ENCODE measurements at regions of chr9 and their contacts with region 1.

Region 1: DNA sequence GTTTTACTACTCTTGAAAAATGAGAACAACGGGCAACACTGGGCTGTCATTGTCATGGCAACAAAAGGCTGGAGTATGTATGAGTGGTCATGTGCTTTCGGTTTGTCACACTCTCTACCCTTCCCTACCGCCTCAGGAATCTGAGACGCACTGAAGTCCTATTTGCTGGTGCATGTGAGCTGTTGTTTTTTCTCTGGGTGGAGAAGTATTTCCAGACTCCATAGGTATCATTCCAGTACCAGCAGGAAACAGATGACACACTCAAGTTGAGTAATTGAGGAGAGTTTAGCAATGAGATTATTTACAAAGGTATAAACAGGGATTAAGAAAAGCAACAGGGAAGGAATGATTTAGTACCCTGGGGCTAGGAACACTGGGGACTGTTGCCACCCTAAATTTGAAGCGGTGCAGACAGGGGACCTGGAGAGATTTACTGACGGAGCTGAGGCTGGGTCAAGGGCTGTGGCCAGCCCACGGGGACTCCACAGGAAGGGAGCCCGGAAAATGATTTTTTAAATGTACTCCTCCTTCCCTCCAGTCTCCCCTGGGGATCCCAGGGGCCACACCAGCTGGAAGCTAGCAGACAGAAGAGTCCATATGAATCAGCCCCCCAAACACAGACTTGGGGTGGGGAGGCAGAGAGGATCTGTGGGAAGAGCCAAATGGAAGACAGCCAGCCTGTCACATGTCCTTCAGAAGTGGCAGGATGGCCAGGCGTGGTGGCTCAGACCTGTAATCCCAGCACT is 13.3 kb upstream of the ZBTB43 start:
- DNase-seq: peak; percentile 99
- H3K4me3 ChIP-seq: no peak overlapping the region
- H3K27ac ChIP-seq: peak overlapping the region; percentile 94
- H3K4me1 ChIP-seq: peaks cover 50% of the 10 kb centered on the region
- H3K27me3 ChIP-seq: no peaks in the 10 kb centered on the region
- CTCF ChIP-seq: no peak

Region 2: DNA sequence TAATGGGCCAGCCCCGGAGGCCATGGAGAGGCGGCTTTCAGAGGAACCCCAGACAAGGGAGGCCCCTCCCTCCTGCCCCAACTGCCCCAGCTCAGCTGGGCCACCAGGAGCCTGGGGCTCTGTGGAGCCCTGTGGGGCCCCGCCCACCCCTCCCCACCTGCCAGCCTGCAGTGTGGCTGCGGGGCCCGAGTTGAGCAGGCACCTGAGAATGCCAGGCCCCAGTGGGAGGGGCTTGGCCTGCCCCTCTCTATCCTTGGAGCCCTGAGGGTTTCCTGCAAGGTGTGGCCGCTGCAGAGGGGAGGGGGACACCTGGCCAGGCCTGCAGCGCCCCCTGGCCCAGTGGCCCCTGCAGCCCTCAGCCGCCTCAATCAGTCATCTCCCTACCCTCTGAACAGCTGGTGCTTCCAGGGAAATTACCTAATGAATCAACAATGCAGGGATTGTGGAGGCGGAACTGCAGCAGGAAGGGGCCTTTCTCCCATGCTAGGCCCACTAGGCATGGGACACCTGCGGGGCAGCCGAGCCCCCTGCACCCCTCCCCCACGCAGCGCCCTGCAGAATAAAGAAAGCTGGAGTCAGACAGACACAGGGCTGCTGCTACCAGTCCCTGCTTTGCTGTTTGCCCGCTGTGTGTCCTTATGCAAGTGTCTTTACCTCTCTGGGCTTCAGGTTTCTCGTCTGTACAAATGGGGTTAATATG is 129.9 kb before region 1 on chr9:
- CTCF ChIA-PET with region 1: no interaction called
- dilution Hi-C with region 1: loop called (anchors 5 kb)
- in situ Hi-C with region 1: no loop called
- intact Hi-C with region 1: no loop called
- DNase-seq: peak; percentile 87
- H3K4me3 ChIP-seq: no peak overlapping the region
- H3K27ac ChIP-seq: peak overlapping the region; percentile 5
- H3K4me1 ChIP-seq: peaks cover 45% of the 10 kb centered on the region
- H3K27me3 ChIP-seq: no peaks in the 10 kb centered on the region
- CTCF ChIP-seq: peak; percentile 6 to 47

Region 3: DNA sequence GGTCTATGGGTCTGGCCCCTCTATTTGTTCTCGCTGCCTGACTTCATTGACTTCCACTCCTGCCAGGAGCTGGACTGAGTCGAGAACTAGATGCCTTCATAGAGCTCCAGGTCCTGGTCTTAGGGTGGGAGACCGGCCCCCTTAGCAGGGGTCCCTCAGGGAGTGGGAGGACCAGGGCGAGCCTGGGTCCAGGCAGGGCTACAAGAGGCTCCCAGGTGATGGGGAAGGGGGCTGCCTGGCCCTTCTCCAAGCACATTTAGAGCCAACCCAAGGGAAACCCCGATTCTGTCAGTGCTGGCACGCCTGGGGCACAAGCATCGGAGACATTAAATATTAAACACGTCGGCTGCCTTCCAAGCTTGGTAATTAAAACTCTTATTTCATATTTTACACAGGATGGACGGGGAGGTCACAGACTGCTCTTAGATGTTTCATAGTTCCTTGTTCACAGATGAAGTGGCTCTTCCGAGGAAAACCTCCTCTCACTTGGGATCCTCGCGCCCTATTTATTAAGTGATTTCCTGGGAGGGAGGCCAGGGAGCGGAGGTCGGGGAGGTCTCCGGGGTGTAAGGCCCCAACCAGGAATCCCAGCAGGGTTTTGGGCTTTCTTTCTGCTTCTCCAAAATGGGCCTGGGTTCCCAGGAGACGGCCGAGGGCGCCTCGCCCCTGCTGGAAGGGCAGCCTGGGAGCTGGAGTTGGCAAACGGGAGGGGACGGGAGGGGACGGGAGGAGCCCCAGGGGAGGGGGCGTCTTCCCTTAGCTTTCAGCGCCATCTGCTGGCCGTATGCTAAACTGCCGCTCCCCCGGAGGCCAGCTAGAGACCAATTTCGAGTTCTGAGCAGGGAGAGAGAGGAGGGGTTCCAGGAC is 10.2 kb before region 1 on chr9:
- CTCF ChIA-PET with region 1: interaction called, 10 read pairs
- dilution Hi-C with region 1: no loop called
- in situ Hi-C with region 1: no loop called
- intact Hi-C with region 1: no loop called
- DNase-seq: peak; percentile 65
- H3K4me3 ChIP-seq: peak overlapping the region in 1 of 3 experiments; percentile 23
- H3K27ac ChIP-seq: no peak overlapping the region
- H3K4me1 ChIP-seq: no peaks in the 10 kb centered on the region
- H3K27me3 ChIP-seq: no peaks in the 10 kb centered on the region
- CTCF ChIP-seq: peak; percentile 69 to 91

Region 4: DNA sequence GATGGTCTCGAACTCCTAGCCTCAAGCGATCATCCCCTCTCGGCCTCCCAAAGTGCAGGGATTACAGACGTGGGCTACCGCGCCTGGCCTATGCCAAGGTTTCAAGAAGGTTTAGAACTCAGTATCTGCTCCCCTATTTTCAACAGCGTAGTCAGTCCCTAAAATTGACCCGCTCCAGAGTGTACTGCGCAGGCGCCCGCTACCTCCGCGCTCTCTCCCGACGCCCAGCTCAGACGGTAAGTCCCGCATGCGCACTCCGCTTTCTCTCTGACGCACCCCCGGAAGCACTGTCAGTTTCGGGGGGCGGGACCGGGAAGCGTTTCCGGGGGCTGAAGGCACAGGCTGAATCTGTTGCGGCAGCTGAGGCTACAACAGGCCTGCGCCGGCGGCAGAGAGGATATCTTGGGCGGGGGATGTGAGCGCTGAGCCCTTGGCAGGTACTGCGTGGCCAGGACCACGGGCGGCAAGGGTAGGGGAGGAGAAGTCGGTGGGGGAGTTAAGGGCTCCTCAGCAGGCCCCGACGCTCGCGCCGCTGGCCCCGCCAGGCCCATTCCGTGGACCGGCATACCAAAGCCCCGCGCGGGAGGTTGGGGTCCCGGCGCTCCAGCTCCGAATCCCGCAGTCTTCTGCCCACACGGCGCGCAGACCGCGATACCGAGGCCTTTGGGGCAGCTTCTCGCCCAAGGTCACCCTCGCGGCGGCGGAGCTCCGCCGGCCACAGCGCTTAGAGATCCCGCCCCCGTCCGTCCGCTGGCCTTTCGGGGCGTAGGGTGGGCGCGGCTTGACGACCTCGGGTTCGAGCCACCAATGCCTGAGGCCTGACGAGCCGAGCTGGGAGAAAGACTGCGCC is 13.3 kb after region 1 on chr9 and contains the start of gene ZBTB43:
- CTCF ChIA-PET with region 1: no interaction called
- dilution Hi-C with region 1: no loop called
- in situ Hi-C with region 1: no loop called
- intact Hi-C with region 1: loop called (anchors 1 kb)
- DNase-seq: peak; percentile 95
- H3K4me3 ChIP-seq: peak within 1 kb of the TSS; percentile 73 to 88 (median 77)
- H3K27ac ChIP-seq: peak within 1 kb of the TSS; percentile 94
- H3K4me1 ChIP-seq: peaks cover 14% of the 10 kb centered on the region
- H3K27me3 ChIP-seq: no peaks in the 10 kb centered on the region
- CTCF ChIP-seq: no peak
- total RNA-seq, gene ZBTB43: 24.0 to 32.4 TPM

Measured in mammary epithelial cell (primary cell).